HEK293 (cell line): ENCODE measurements at regions of chr1 and their contacts with region 1.

Region 1: GRCh38 chr1:200890818-200891773 is 3.6 kb upstream of the INAVA start:
- H3K4me3 ChIP-seq: peak overlapping the region; percentile 59
- H3K27ac ChIP-seq: peak overlapping the region; percentile 62; the same call in 1 of the 2 replicates
- H3K4me1 ChIP-seq: no peaks in the 10 kb centered on the region
- CTCF ChIP-seq: peak; percentile 48; the same call in 1 of the 2 replicates

Region 2: DNA sequence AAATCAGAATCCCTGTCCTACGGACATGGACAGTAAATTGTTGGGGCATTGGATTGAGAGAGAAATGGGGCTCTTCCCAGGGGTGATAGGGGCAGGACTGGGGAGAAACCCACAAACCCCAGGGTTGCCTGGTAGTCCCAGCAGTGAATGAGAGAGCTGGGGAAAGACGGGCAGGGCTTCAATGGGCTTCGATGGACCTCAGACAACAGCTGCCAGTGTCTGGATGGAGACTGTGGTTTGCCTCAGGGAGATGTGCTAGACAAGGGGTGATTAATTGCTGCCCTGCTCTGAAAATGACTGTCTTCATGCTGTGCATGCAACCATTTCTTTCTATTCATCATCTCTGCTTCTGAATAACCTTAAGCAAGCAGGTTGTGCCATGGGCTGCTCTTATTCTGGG is 10.9 kb before region 1 on chr1:
- CTCF ChIA-PET with region 1: interaction called, 10 read pairs
- POLR2A ChIA-PET with region 1: no interaction called
- H3K4me3 ChIP-seq: no peak overlapping the region
- H3K27ac ChIP-seq: no peak overlapping the region
- H3K4me1 ChIP-seq: no peaks in the 10 kb centered on the region
- CTCF ChIP-seq: no peak

Region 3: DNA sequence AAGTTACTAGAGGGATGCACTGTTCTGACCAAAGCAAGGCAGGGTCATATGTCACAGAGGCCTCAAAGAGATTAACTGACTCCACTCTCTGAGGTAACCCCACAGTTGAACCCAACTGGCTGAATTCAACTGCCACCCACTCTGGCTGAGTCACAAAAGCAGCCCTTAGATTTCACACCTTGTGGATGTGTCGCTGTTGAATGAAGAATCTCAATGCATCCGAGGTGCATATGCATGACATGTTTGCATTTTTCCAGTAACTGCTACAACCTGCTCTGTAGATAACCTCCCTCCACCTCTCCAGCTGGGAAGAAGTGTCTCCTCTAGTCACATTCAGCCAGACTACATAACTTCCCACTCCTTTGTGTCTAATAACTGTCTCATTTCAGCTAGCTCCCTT is 160.3 kb after region 1 on chr1:
- CTCF ChIA-PET with region 1: no interaction called
- POLR2A ChIA-PET with region 1: no interaction called
- H3K4me3 ChIP-seq: no peak overlapping the region
- H3K27ac ChIP-seq: no peak overlapping the region
- H3K4me1 ChIP-seq: peaks cover 4% of the 10 kb centered on the region
- CTCF ChIP-seq: no peak